CD4-positive, alpha-beta memory T cell (primary cell): ENCODE measurements at regions of chr3 and their contacts with region 1.

Region 1: DNA sequence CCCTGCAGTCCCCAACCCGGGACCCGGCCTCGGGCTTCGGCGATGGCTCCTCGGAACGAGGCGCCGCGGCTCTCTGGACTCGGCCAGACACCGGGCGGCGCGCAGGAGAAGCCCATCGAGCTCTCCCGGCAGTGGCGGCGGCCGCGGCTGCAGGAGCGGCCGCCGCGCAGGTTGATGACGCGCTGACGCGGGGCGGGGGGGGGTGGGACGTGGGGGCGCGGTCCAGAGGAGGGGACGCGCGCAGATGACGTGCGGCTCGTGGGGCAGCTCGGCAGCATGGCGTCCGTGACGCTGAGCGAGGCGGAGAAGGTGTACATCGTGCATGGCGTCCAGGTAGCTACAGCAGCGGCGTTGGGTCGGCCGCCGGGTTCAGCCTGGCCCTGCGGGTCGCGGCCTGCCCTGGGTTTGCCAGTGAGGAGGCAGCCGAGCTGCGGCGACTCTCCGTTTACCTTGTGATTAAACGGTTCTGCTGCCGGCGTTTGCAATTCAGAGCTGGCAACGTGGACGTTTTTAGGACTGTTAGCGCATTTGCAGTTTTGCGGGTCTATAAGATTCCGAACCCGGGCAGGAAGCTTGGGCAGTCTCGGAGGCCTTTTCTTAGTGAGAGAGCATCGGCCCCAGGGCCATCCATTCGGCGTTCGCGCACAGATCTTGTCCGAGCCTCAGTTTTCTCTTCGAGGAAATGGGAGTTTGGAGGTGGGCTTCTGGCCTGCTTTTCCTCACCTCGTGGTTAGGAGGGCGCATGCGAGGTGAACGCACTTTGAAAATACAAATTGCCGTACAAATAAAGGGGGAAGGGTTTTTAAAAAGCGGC is at the starts of genes EXOSC7 and ZDHHC3:
- DNase-seq: peak; percentile 81 to 89 (median 88)
- H3K4me3 ChIP-seq: peak within 1 kb of the TSS; percentile 85 to 94
- H3K4me3 Mint-ChIP-seq: peak within 1 kb of the TSS; percentile 93 to 97 (median 95)
- H3K27ac ChIP-seq: peak within 1 kb of the TSS; percentile 91
- H3K27ac Mint-ChIP-seq: peak within 1 kb of the TSS; percentile 95 to 97 (median 96)
- H3K4me1 ChIP-seq: peaks cover 55% of the 10 kb centered on the region
- H3K4me1 Mint-ChIP-seq: peaks cover 42 to 75% (median 60%) of the 10 kb centered on the region in 4 donors
- H3K27me3 ChIP-seq: no peaks in the 10 kb centered on the region
- H3K27me3 Mint-ChIP-seq: no peaks in the 10 kb centered on the region
- total RNA-seq, gene EXOSC7: 44.6 to 45.3 TPM
- total RNA-seq, gene ZDHHC3: 40.1 to 41.9 TPM

Region 2: DNA sequence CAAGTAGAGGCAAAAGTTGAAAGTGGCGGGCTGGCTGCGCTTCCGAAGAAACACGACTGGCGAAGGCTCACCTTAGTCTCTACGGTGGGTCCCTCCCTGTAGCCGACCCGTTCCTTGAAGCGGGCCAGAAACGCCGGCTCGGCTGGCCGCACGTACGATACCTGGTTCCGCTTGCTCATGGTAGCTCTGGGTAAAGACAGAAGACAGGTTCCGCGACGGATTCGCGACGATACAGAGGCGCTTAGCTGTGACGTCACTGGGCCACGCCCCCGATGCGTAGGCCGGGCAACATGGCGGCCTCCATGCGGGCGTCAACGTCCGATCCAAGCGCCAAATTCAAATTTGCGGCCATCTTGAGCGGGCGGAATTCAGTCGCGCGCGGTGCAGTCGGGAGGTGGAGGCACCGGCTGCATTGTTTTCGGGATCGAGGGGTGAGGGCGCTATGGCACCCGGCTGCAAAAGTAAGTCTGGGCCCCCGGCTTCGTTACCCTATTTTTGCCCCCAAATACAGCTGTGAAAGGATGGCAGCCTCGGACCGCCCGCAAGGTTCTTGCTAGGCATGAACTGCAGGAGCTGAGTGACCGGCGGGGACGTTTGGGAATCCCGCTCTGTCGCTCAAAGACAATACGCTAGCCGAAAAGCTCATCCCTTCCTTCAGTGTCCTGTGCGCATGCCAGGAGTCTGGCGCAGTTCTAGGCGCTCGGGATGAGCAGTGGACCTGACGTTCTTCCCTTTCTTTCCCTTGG is 214.6 kb before region 1 on chr3 and contains the starts of genes KIAA1143 and KIF15:
- CTCF ChIA-PET with region 1: no interaction called
- POLR2A ChIA-PET with region 1: interaction called, 16 read pairs
- intact Hi-C with region 1: loop called (anchors 1 kb)
- DNase-seq: peak; percentile 92 to 96 (median 93)
- H3K4me3 ChIP-seq: peak within 1 kb of the TSS; percentile 71 to 98
- H3K4me3 Mint-ChIP-seq: peak within 1 kb of the TSS; percentile 86 to 98 (median 92)
- H3K27ac ChIP-seq: peak within 1 kb of the TSS; percentile 84
- H3K27ac Mint-ChIP-seq: peak within 1 kb of the TSS; percentile 92 to 97 (median 94)
- H3K4me1 ChIP-seq: peaks cover 23% of the 10 kb centered on the region
- H3K4me1 Mint-ChIP-seq: peaks cover 21 to 42% (median 33%) of the 10 kb centered on the region in 4 donors
- H3K27me3 ChIP-seq: no peaks in the 10 kb centered on the region
- H3K27me3 Mint-ChIP-seq: peaks cover 0 to 1% of the 10 kb centered on the region in 2 donors
- total RNA-seq, gene KIAA1143: 37.6 to 39.7 TPM
- total RNA-seq, gene KIF15: 0.19 to 0.38 TPM

Region 3: DNA sequence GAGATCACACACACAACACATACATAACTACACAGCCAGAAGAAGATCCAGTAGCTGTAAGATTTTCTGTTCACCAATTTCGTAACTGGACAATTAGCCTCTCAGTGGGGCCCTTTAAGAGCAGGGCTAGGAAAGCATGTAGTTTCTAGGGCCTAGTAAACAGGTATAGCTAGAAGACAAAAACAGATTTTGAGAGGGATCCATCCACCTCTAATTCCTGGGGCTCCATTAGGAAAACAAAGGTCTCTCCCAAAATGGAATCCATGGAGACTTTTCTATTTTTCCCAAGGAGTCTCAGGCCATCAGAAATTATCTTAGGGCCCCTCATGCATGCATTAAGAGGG is 204.1 kb before region 1 on chr3:
- CTCF ChIA-PET with region 1: no interaction called
- POLR2A ChIA-PET with region 1: no interaction called
- intact Hi-C with region 1: no loop called
- DNase-seq: no peak
- H3K4me3 ChIP-seq: no peak overlapping the region
- H3K4me3 Mint-ChIP-seq: no peak overlapping the region
- H3K27ac ChIP-seq: no peak overlapping the region
- H3K27ac Mint-ChIP-seq: no peak overlapping the region
- H3K4me1 ChIP-seq: no peaks in the 10 kb centered on the region
- H3K4me1 Mint-ChIP-seq: no peaks in the 10 kb centered on the region
- H3K27me3 ChIP-seq: no peaks in the 10 kb centered on the region
- H3K27me3 Mint-ChIP-seq: no peaks in the 10 kb centered on the region

Region 4: GRCh38 chr3:44992555-44993470 is 16.6 kb after region 1 on chr3:
- CTCF ChIA-PET with region 1: interaction called, 18 read pairs
- POLR2A ChIA-PET with region 1: interaction called, 10 read pairs
- intact Hi-C with region 1: no loop called
- DNase-seq: no peak
- H3K4me3 ChIP-seq: no peak overlapping the region
- H3K4me3 Mint-ChIP-seq: no peak overlapping the region
- H3K27ac ChIP-seq: no peak overlapping the region
- H3K27ac Mint-ChIP-seq: peak overlapping the region in 4 of 7 donors; percentile 37 to 73 (median 65)
- H3K4me1 ChIP-seq: peaks cover 19% of the 10 kb centered on the region
- H3K4me1 Mint-ChIP-seq: peaks cover 31 to 60% (median 41%) of the 10 kb centered on the region in 4 donors
- H3K27me3 ChIP-seq: no peaks in the 10 kb centered on the region
- H3K27me3 Mint-ChIP-seq: no peaks in the 10 kb centered on the region

Region 5: DNA sequence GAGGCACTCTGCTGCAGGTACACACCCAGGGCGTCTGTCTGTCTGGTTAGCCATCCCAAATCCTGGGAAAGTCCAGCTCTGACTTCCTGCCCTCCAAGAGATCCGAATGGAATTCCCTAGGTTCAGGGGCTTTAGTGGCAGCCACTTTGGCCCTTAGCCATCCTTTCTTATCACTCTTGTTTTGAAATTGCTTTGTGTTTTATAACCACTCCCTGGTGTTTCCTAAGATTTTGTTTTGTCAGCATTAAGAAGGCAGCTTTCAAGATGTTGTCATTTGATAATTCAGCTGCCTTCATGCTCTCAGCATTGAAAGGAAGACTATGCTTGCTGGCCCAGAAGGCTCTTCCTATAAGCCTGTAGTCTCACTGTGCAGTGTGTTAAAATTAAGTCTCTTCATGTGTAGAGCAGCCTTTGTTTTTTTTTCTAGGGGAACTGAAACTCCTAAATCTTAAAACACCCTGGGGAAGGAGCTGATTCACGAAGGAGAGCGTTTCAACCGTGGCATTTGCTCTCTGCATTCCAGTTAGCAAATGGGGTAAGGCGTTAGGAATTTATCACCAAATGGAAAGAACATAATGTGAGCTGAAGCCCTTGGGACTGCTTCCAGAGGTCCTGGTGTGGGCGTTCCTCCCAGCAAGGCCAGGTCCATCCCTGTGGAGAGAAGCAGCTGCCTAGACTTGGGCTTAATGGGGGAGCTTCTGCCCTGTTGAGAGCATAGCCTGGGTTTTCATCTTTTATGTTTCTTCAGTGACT is 35.7 kb after region 1 on chr3:
- CTCF ChIA-PET with region 1: interaction called, 3 read pairs
- POLR2A ChIA-PET with region 1: interaction called, 26 read pairs
- intact Hi-C with region 1: no loop called
- DNase-seq: no peak
- H3K4me3 ChIP-seq: no peak overlapping the region
- H3K4me3 Mint-ChIP-seq: peak overlapping the region in 6 of 8 donors; percentile 9 to 60 (median 48)
- H3K27ac ChIP-seq: no peak overlapping the region
- H3K27ac Mint-ChIP-seq: peak overlapping the region; percentile 21 to 91 (median 72)
- H3K4me1 ChIP-seq: peaks cover 33% of the 10 kb centered on the region
- H3K4me1 Mint-ChIP-seq: peaks cover 10 to 45% (median 31%) of the 10 kb centered on the region in 4 donors
- H3K27me3 ChIP-seq: no peaks in the 10 kb centered on the region
- H3K27me3 Mint-ChIP-seq: no peaks in the 10 kb centered on the region

Region 6: GRCh38 chr3:45075821-45076625 is 99.8 kb after region 1 on chr3:
- CTCF ChIA-PET with region 1: no interaction called
- POLR2A ChIA-PET with region 1: no interaction called
- intact Hi-C with region 1: no loop called
- DNase-seq: no peak
- H3K4me3 ChIP-seq: no peak overlapping the region
- H3K4me3 Mint-ChIP-seq: no peak overlapping the region
- H3K27ac ChIP-seq: no peak overlapping the region
- H3K27ac Mint-ChIP-seq: no peak overlapping the region
- H3K4me1 ChIP-seq: no peaks in the 10 kb centered on the region
- H3K4me1 Mint-ChIP-seq: peaks cover 0 to 4% (median 0%) of the 10 kb centered on the region in 4 donors
- H3K27me3 ChIP-seq: peaks cover 2% of the 10 kb centered on the region
- H3K27me3 Mint-ChIP-seq: peaks cover 4 to 5% of the 10 kb centered on the region in 2 donors

Region 7: GRCh38 chr3:45210308-45211041 is 234.3 kb after region 1 on chr3:
- CTCF ChIA-PET with region 1: interaction called, 11 read pairs
- POLR2A ChIA-PET with region 1: no interaction called
- intact Hi-C with region 1: no loop called
- DNase-seq: peak; percentile 73 to 82 (median 76)
- H3K4me3 ChIP-seq: no peak overlapping the region
- H3K4me3 Mint-ChIP-seq: peak overlapping the region in 2 of 8 donors; percentile 21 to 29
- H3K27ac ChIP-seq: no peak overlapping the region
- H3K27ac Mint-ChIP-seq: peak overlapping the region in 2 of 7 donors; percentile 6 to 77
- H3K4me1 ChIP-seq: peaks cover 22% of the 10 kb centered on the region
- H3K4me1 Mint-ChIP-seq: peaks cover 9 to 28% (median 20%) of the 10 kb centered on the region in 4 donors
- H3K27me3 ChIP-seq: peaks cover 5% of the 10 kb centered on the region
- H3K27me3 Mint-ChIP-seq: peaks cover 0 to 9% of the 10 kb centered on the region in 2 donors